ENCODE measurements at regions of chr15 and their contacts with region 1.

Region 1: DNA sequence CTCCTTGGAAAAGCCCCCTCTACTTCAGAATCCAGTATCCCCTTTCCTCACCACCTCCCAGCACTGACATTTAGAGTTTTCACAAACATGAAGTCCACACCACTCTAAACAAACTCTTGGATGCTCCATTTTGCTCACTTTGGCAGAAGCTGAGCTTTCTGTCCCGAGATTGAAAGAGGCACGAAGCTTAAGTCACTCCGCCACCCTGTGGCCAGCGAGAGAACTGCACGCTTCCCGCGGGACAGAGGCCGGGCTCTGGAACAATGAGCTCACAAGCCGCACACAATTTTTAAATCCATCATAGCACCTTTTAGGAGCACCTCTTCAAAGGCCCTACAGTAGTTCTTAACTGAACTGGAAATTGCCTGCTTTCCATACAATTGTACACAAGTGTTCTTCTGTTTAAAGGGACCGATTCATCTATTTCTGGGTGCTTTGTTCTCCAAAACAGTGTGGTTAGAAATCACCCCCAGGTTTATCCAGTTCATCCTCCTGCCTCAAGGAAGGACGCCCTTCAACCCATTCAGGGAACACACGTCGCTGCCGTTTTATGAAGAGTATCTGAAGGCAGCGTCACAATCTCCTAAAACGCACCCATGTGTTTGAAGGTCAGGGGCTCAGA is 226.1 kb downstream of the VPS13C start:
- DNase-seq: peak; percentile 60 to 78
- ATAC-seq: peak; percentile 60 to 73
- H3K4me3 ChIP-seq: no peak overlapping the region
- H3K27ac ChIP-seq: peak overlapping the region in 1 of 4 donors; percentile 35
- H3K4me1 ChIP-seq: peaks cover 0 to 29% of the 10 kb centered on the region in 2 donors
- H3K27me3 ChIP-seq: no peaks in the 10 kb centered on the region
- CTCF ChIP-seq: peak; percentile 71 to 96 (median 91)
- POLR2A ChIP-seq: no peak

Region 2: GRCh38 chr15:60585743-60586708 is 1248.2 kb before region 1 on chr15:
- in situ Hi-C with region 1: loop called in 3 of 4 experiments (anchors 10 to 25 kb)
- intact Hi-C with region 1: no loop called
- DNase-seq: peak; percentile 32 to 38
- ATAC-seq: peak; percentile 64 to 78
- H3K4me3 ChIP-seq: no peak overlapping the region
- H3K27ac ChIP-seq: peak overlapping the region; percentile 12 to 64 (median 34)
- H3K4me1 ChIP-seq: peaks cover 76 to 95% of the 10 kb centered on the region in 2 donors
- H3K27me3 ChIP-seq: no peaks in the 10 kb centered on the region
- CTCF ChIP-seq: peak; percentile 83 to 94 (median 87)
- POLR2A ChIP-seq: no peak

Region 3: GRCh38 chr15:60945196-60945595 is 889.0 kb before region 1 on chr15:
- in situ Hi-C with region 1: loop called in 1 of 4 experiments (anchors 25 kb)
- intact Hi-C with region 1: loop called (anchors 10 kb)
- DNase-seq: peak; percentile 53 to 77
- ATAC-seq: peak; percentile 77 to 83
- H3K4me3 ChIP-seq: no peak overlapping the region
- H3K27ac ChIP-seq: no peak overlapping the region
- H3K4me1 ChIP-seq: peaks cover 30 to 45% of the 10 kb centered on the region in 2 donors
- H3K27me3 ChIP-seq: no peaks in the 10 kb centered on the region
- CTCF ChIP-seq: no peak
- POLR2A ChIP-seq: no peak

Region 4: GRCh38 chr15:61195116-61196002 is 638.8 kb before region 1 on chr15:
- in situ Hi-C with region 1: no loop called
- intact Hi-C with region 1: loop called (anchors 10 kb)
- DNase-seq: no peak
- ATAC-seq: peak; percentile 73 to 85
- H3K4me3 ChIP-seq: no peak overlapping the region
- H3K27ac ChIP-seq: peak overlapping the region; percentile 78 to 86 (median 83)
- H3K4me1 ChIP-seq: peaks cover 73 to 79% of the 10 kb centered on the region in 2 donors
- H3K27me3 ChIP-seq: no peaks in the 10 kb centered on the region
- CTCF ChIP-seq: peak; percentile 59 to 82 (median 72)
- POLR2A ChIP-seq: peak in 1 of 2 donors; percentile 36

Region 5: GRCh38 chr15:61623746-61624145 is 210.4 kb before region 1 on chr15:
- in situ Hi-C with region 1: no loop called
- intact Hi-C with region 1: loop called (anchors 2 kb)
- DNase-seq: peak; percentile 39 to 48
- ATAC-seq: peak; percentile 73 to 81
- H3K4me3 ChIP-seq: peak overlapping the region; percentile 13 to 41 (median 26)
- H3K27ac ChIP-seq: peak overlapping the region; percentile 63 to 82 (median 76)
- H3K4me1 ChIP-seq: peaks cover 17 to 27% of the 10 kb centered on the region in 2 donors
- H3K27me3 ChIP-seq: no peaks in the 10 kb centered on the region
- CTCF ChIP-seq: no peak
- POLR2A ChIP-seq: no peak